H1 (cell line): ENCODE measurements at regions of chr1 and their contacts with region 1.

Region 1: DNA sequence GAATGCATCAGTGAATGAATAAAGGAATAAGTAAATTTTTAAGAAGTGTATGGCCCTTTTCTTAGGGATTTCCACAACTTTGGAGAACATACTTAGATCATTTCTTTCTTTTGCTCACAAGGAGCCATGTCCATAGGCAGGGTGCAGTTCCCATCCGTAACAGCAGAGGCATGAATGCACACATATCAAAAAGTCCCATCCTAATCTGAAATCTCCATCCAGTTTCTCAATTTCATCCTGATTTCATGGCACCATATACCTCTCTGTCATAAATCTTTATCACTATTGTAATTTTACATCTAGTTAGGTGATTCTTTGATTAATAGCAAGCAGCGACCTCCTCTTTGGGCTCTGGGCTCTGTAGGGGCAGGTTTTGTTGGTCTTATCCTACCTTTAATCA is 359.2 kb downstream of the RRAGC start:
- DNase-seq: no peak
- H3K4me3 ChIP-seq: no peak overlapping the region
- H3K27ac ChIP-seq: no peak overlapping the region
- H3K4me1 ChIP-seq: peaks cover 9 to 24% (median 16%) of the 10 kb centered on the region in 4 experiments
- H3K27me3 ChIP-seq: no peaks in the 10 kb centered on the region; a peak in 1 of 7 replicates
- CTCF ChIP-seq: peak; percentile 1 to 54 (median 19); a peak in 3 of 4 replicates
- EP300 ChIP-seq: no peak
- POLR2A ChIP-seq: no peak
- RAD21 ChIP-seq: peak; percentile 37 to 46; a peak in 3 of 4 replicates

Region 2: GRCh38 chr1:38046884-38047602 is 453.3 kb before region 1 on chr1:
- CTCF ChIA-PET with region 1: interaction called, 12 read pairs
- POLR2A ChIA-PET with region 1: interaction called, 3 read pairs
- DNase-seq: peak in 1 of 2 experiments; percentile 81
- H3K4me3 ChIP-seq: peak overlapping the region; percentile 48 to 68 (median 56)
- H3K27ac ChIP-seq: no peak overlapping the region
- H3K4me1 ChIP-seq: peaks cover 3 to 18% (median 10%) of the 10 kb centered on the region in 4 experiments
- H3K27me3 ChIP-seq: peaks cover 10 to 48% (median 40%) of the 10 kb centered on the region in 4 experiments; a peak in 6 of 7 replicates
- CTCF ChIP-seq: 0 out of 4 replicates have a peak, but pooled peaks of 1 of the 3 experiments have one; percentile 3
- EP300 ChIP-seq: no peak
- POLR2A ChIP-seq: no peak
- RAD21 ChIP-seq: peak in 1 of 2 experiments; percentile 18; a peak in 2 of 4 replicates

Region 3: GRCh38 chr1:38489844-38490270 is 10.5 kb before region 1 on chr1:
- CTCF ChIA-PET with region 1: interaction called, 25 read pairs
- POLR2A ChIA-PET with region 1: interaction called, 5 read pairs
- DNase-seq: peak; percentile 96 to 98
- H3K4me3 ChIP-seq: no peak overlapping the region
- H3K27ac ChIP-seq: no peak overlapping the region
- H3K4me1 ChIP-seq: peaks cover 0 to 9% (median 4%) of the 10 kb centered on the region in 4 experiments; a peak in 4 of 7 replicates
- H3K27me3 ChIP-seq: no peaks in the 10 kb centered on the region; a peak in 2 of 7 replicates
- CTCF ChIP-seq: peak; percentile 91 to 100 (median 98)
- EP300 ChIP-seq: no peak; a peak in 1 of 3 replicates
- POLR2A ChIP-seq: no peak
- RAD21 ChIP-seq: peak; percentile 78 to 81

Region 4: GRCh38 chr1:38512789-38513188 is 12.4 kb after region 1 on chr1:
- CTCF ChIA-PET with region 1: interaction called, 13 read pairs
- POLR2A ChIA-PET with region 1: interaction called, 4 read pairs
- DNase-seq: no peak
- H3K4me3 ChIP-seq: no peak overlapping the region
- H3K27ac ChIP-seq: no peak overlapping the region
- H3K4me1 ChIP-seq: peaks cover 0 to 8% (median 4%) of the 10 kb centered on the region in 4 experiments; a peak in 5 of 7 replicates
- H3K27me3 ChIP-seq: 0 out of 7 replicates have a peak, but pooled peaks cover 0 to 2% (median 0%) of the 10 kb centered on the region in 4 experiments
- CTCF ChIP-seq: no peak
- EP300 ChIP-seq: no peak
- POLR2A ChIP-seq: no peak
- RAD21 ChIP-seq: no peak